ENCODE measurements at regions of chr2 and their contacts with region 1.

Region 1: DNA sequence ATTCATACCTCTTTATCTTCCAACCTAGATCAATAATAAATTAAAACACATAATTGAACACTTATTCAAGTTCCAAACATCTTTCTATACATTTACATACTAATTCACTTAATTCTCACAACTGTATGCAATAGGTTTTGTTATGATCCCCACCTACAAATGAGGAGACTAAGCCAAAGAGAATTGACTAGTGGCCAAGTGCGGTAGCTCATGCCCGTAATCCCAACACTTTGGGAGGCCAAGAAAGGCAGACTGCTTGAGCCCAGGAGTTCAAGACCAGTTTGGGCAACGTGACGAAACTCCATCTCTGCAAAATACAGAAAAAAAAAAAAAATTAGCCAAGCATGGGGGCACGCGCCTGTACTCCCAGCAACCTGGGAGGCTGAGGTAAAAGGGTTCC is 36.8 kb downstream of the KCNG3 start:
- DNase-seq: no peak
- H3K4me3 ChIP-seq: no peak overlapping the region
- H3K27ac ChIP-seq: no peak overlapping the region
- H3K4me1 ChIP-seq: peaks cover 2 to 5% (median 4%) of the 10 kb centered on the region in 4 experiments
- H3K27me3 ChIP-seq: no peaks in the 10 kb centered on the region
- CTCF ChIP-seq: peak; percentile 30 to 61 (median 44); a peak in 3 of 4 replicates
- EP300 ChIP-seq: no peak
- POLR2A ChIP-seq: no peak
- RAD21 ChIP-seq: no peak; a peak in 2 of 4 replicates

Region 2: GRCh38 chr2:42446503-42447271 is 10.3 kb before region 1 on chr2:
- CTCF ChIA-PET with region 1: interaction called, 11 read pairs
- POLR2A ChIA-PET with region 1: no interaction called
- DNase-seq: no peak
- H3K4me3 ChIP-seq: no peak overlapping the region
- H3K27ac ChIP-seq: no peak overlapping the region
- H3K4me1 ChIP-seq: peaks cover 0 to 3% (median 0%) of the 10 kb centered on the region in 4 experiments; a peak in 1 of 7 replicates
- H3K27me3 ChIP-seq: no peaks in the 10 kb centered on the region
- CTCF ChIP-seq: no peak
- EP300 ChIP-seq: no peak
- POLR2A ChIP-seq: no peak
- RAD21 ChIP-seq: no peak

Region 3: GRCh38 chr2:42523361-42523760 is 66.3 kb after region 1 on chr2:
- CTCF ChIA-PET with region 1: no interaction called
- POLR2A ChIA-PET with region 1: no interaction called
- DNase-seq: no peak
- H3K4me3 ChIP-seq: no peak overlapping the region
- H3K27ac ChIP-seq: no peak overlapping the region
- H3K4me1 ChIP-seq: peaks cover 0 to 7% (median 5%) of the 10 kb centered on the region in 4 experiments; a peak in 5 of 7 replicates
- H3K27me3 ChIP-seq: no peaks in the 10 kb centered on the region
- CTCF ChIP-seq: no peak
- EP300 ChIP-seq: no peak
- POLR2A ChIP-seq: no peak
- RAD21 ChIP-seq: no peak

Measured in H1 (cell line).